PC-3 (cell line): ENCODE measurements at regions of chr17 and their contacts with region 1.

Region 1: GRCh38 chr17:44006598-44007345 is 2.4 kb downstream of the NAGS start:
- DNase-seq: peak; percentile 100
- ATAC-seq: peak; percentile 59
- H3K4me3 ChIP-seq: peak overlapping the region; percentile 83
- H3K27ac ChIP-seq: peak overlapping the region; percentile 66
- H3K4me1 ChIP-seq: peaks cover 33% of the 10 kb centered on the region
- H3K27me3 ChIP-seq: no peaks in the 10 kb centered on the region
- CTCF ChIP-seq: peak; percentile 64

Region 2: GRCh38 chr17:43967251-43967875 is 39.4 kb before region 1 on chr17:
- CTCF ChIA-PET with region 1: no interaction called
- POLR2A ChIA-PET with region 1: no interaction called
- intact Hi-C with region 1: no loop called
- DNase-seq: no peak
- ATAC-seq: no peak
- H3K4me3 ChIP-seq: no peak overlapping the region
- H3K27ac ChIP-seq: no peak overlapping the region
- H3K4me1 ChIP-seq: no peaks in the 10 kb centered on the region
- H3K27me3 ChIP-seq: no peaks in the 10 kb centered on the region
- CTCF ChIP-seq: no peak

Region 3: GRCh38 chr17:44024271-44024663 is 17.5 kb after region 1 on chr17:
- CTCF ChIA-PET with region 1: no interaction called
- POLR2A ChIA-PET with region 1: no interaction called
- intact Hi-C with region 1: no loop called
- DNase-seq: no peak
- ATAC-seq: no peak
- H3K4me3 ChIP-seq: no peak overlapping the region
- H3K27ac ChIP-seq: no peak overlapping the region
- H3K4me1 ChIP-seq: no peaks in the 10 kb centered on the region
- H3K27me3 ChIP-seq: no peaks in the 10 kb centered on the region
- CTCF ChIP-seq: no peak

Region 4: DNA sequence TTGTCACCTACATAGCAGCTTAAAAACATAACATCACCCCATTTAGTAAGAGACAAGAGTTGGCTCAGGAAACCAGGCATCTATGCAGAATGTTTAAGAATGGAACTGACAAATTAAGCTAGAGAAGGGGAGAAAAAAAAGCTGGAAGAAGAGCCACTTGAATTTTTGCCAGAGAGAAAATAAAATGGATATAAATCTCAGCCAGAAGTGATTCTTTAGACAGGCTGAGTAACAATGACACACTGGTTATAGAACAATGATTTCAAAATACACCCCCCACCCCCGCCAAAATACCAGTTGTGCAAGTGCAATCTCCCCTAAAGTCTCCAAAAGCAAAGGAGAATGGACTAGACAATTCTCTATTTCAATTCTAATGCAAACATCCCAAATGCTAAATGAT is 37.3 kb after region 1 on chr17:
- CTCF ChIA-PET with region 1: no interaction called
- POLR2A ChIA-PET with region 1: no interaction called
- intact Hi-C with region 1: loop called (anchors 1 kb)
- DNase-seq: peak; percentile 62
- ATAC-seq: peak; percentile 64
- H3K4me3 ChIP-seq: no peak overlapping the region
- H3K27ac ChIP-seq: 0 out of 2 replicates have a peak overlapping the region, but pooled peaks have one; percentile 15
- H3K4me1 ChIP-seq: peaks cover 16% of the 10 kb centered on the region
- H3K27me3 ChIP-seq: no peaks in the 10 kb centered on the region
- CTCF ChIP-seq: no peak